PC-3 (cell line): ENCODE measurements at regions of chrX and their contacts with region 1.

Region 1: GRCh38 chrX:130009658-130010223 is 27.3 kb downstream of the BCORL1 start:
- DNase-seq: no peak
- ATAC-seq: no peak
- H3K4me3 ChIP-seq: no peak overlapping the region
- H3K27ac ChIP-seq: no peak overlapping the region
- H3K4me1 ChIP-seq: no peaks in the 10 kb centered on the region
- H3K27me3 ChIP-seq: no peaks in the 10 kb centered on the region
- CTCF ChIP-seq: no peak

Region 2: GRCh38 chrX:129833152-129833990 is 176.4 kb before region 1 on chrX:
- CTCF ChIA-PET with region 1: no interaction called
- POLR2A ChIA-PET with region 1: no interaction called
- intact Hi-C with region 1: no loop called
- DNase-seq: no peak
- ATAC-seq: peak; percentile 45; the same call in 1 of the 2 replicates
- H3K4me3 ChIP-seq: no peak overlapping the region
- H3K27ac ChIP-seq: no peak overlapping the region
- H3K4me1 ChIP-seq: no peaks in the 10 kb centered on the region
- H3K27me3 ChIP-seq: no peaks in the 10 kb centered on the region
- CTCF ChIP-seq: no peak

Region 3: DNA sequence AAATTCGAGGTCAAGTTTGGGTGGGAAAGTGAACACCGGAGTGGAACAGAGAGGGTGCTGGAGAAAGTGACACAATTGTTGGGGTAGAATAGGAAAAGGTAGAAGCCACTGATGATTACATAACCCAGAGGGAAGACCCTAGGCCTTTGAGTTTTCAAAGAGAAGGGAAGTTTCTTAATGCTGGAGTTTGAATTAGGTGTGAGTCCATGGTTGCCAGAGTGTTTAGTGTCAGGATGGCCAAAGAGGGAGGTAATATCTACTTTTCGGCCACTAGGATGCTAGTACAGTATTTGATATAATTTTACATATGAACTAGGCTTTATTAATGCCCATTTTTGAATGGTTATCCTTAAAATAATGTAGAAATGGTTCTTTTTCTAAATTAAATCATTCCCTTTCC is 21.9 kb before region 1 on chrX:
- CTCF ChIA-PET with region 1: interaction called, 10 read pairs
- POLR2A ChIA-PET with region 1: interaction called, 11 read pairs
- intact Hi-C with region 1: no loop called
- DNase-seq: no peak
- ATAC-seq: no peak
- H3K4me3 ChIP-seq: no peak overlapping the region
- H3K27ac ChIP-seq: no peak overlapping the region
- H3K4me1 ChIP-seq: no peaks in the 10 kb centered on the region; the same call in 1 of the 2 replicates
- H3K27me3 ChIP-seq: no peaks in the 10 kb centered on the region
- CTCF ChIP-seq: no peak

Region 4: GRCh38 chrX:130060122-130061069 is 50.7 kb after region 1 on chrX:
- CTCF ChIA-PET with region 1: interaction called, 4 read pairs
- POLR2A ChIA-PET with region 1: interaction called, 15 read pairs
- intact Hi-C with region 1: no loop called
- DNase-seq: peak; percentile 86
- ATAC-seq: peak; percentile 88
- H3K4me3 ChIP-seq: peak overlapping the region; percentile 68
- H3K27ac ChIP-seq: no peak overlapping the region
- H3K4me1 ChIP-seq: peaks cover 5% of the 10 kb centered on the region; the same call in 1 of the 2 replicates
- H3K27me3 ChIP-seq: no peaks in the 10 kb centered on the region
- CTCF ChIP-seq: peak; percentile 79

Region 5: GRCh38 chrX:130091958-130092522 is 82.3 kb after region 1 on chrX:
- CTCF ChIA-PET with region 1: no interaction called
- POLR2A ChIA-PET with region 1: no interaction called
- intact Hi-C with region 1: no loop called
- DNase-seq: no peak
- ATAC-seq: no peak
- H3K4me3 ChIP-seq: no peak overlapping the region
- H3K27ac ChIP-seq: no peak overlapping the region
- H3K4me1 ChIP-seq: no peaks in the 10 kb centered on the region
- H3K27me3 ChIP-seq: no peaks in the 10 kb centered on the region
- CTCF ChIP-seq: no peak